Naive thymus-derived CD4-positive, alpha-beta T cell (primary cell): ENCODE measurements at regions of chr19 and their contacts with region 1.

Region 1: GRCh38 chr19:10653715-10654492 is at the start of gene ILF3:
- DNase-seq: peak; percentile 97 to 100 (median 100)
- ATAC-seq: peak; percentile 89
- H3K4me3 ChIP-seq: peak within 1 kb of the TSS; percentile 87
- H3K4me3 Mint-ChIP-seq: peak within 1 kb of the TSS; percentile 93 to 98 (median 95)
- H3K27ac ChIP-seq: peak within 1 kb of the TSS; percentile 100
- H3K27ac Mint-ChIP-seq: peak within 1 kb of the TSS; percentile 94 to 99 (median 98)
- H3K4me1 ChIP-seq: peaks cover 32 to 38% of the 10 kb centered on the region in 2 donors
- H3K4me1 Mint-ChIP-seq: peaks cover 17 to 61% (median 42%) of the 10 kb centered on the region in 7 donors
- H3K27me3 ChIP-seq: no peaks in the 10 kb centered on the region
- H3K27me3 Mint-ChIP-seq: peaks cover 0 to 3% (median 0%) of the 10 kb centered on the region in 5 donors
- total RNA-seq, gene ILF3: 346 to 515 (median 368) TPM

Region 2: GRCh38 chr19:10403137-10404021 is 250.5 kb before region 1 on chr19 and contains the start of gene CDC37:
- CTCF ChIA-PET with region 1: no interaction called
- POLR2A ChIA-PET with region 1: no interaction called
- intact Hi-C with region 1: loop called (anchors 1 kb)
- DNase-seq: peak; percentile 95 to 99 (median 97)
- ATAC-seq: peak; percentile 88
- H3K4me3 ChIP-seq: peak within 1 kb of the TSS; percentile 87
- H3K4me3 Mint-ChIP-seq: peak within 1 kb of the TSS; percentile 90 to 97 (median 95)
- H3K27ac ChIP-seq: peak within 1 kb of the TSS; percentile 97
- H3K27ac Mint-ChIP-seq: peak within 1 kb of the TSS; percentile 80 to 97 (median 95)
- H3K4me1 ChIP-seq: peaks cover 55 to 59% of the 10 kb centered on the region in 2 donors
- H3K4me1 Mint-ChIP-seq: peaks cover 40 to 85% (median 59%) of the 10 kb centered on the region in 7 donors
- H3K27me3 ChIP-seq: no peaks in the 10 kb centered on the region
- H3K27me3 Mint-ChIP-seq: peaks cover 0 to 3% (median 0%) of the 10 kb centered on the region in 5 donors
- total RNA-seq, gene CDC37: 169 to 229 (median 180) TPM

Region 3: GRCh38 chr19:10602330-10603083 is 51.4 kb before region 1 on chr19:
- CTCF ChIA-PET with region 1: interaction called, 3 read pairs
- POLR2A ChIA-PET with region 1: interaction called, 29 read pairs
- intact Hi-C with region 1: loop called (anchors 1 kb)
- DNase-seq: peak; percentile 73 to 89 (median 86)
- ATAC-seq: peak; percentile 93
- H3K4me3 ChIP-seq: peak overlapping the region; percentile 92
- H3K4me3 Mint-ChIP-seq: peak overlapping the region; percentile 97 to 100 (median 99)
- H3K27ac ChIP-seq: peak overlapping the region; percentile 100
- H3K27ac Mint-ChIP-seq: peak overlapping the region; percentile 94 to 100 (median 100)
- H3K4me1 ChIP-seq: peaks cover 15 to 20% of the 10 kb centered on the region in 2 donors
- H3K4me1 Mint-ChIP-seq: peaks cover 18 to 37% (median 31%) of the 10 kb centered on the region in 7 donors
- H3K27me3 ChIP-seq: no peaks in the 10 kb centered on the region
- H3K27me3 Mint-ChIP-seq: peaks cover 0 to 12% (median 0%) of the 10 kb centered on the region in 5 donors

Region 4: GRCh38 chr19:10760273-10760944 is 106.5 kb after region 1 on chr19:
- CTCF ChIA-PET with region 1: no interaction called
- POLR2A ChIA-PET with region 1: no interaction called
- intact Hi-C with region 1: loop called in 1 of 2 experiments (anchors 1 kb)
- DNase-seq: peak in 1 of 9 donors; percentile 57
- ATAC-seq: no peak
- H3K4me3 ChIP-seq: no peak overlapping the region
- H3K4me3 Mint-ChIP-seq: peak overlapping the region; percentile 60 to 86 (median 82)
- H3K27ac ChIP-seq: peak overlapping the region; percentile 70
- H3K27ac Mint-ChIP-seq: peak overlapping the region; percentile 83 to 99 (median 94)
- H3K4me1 ChIP-seq: peaks cover 62 to 79% of the 10 kb centered on the region in 2 donors
- H3K4me1 Mint-ChIP-seq: peaks cover 69 to 92% (median 84%) of the 10 kb centered on the region in 7 donors
- H3K27me3 ChIP-seq: no peaks in the 10 kb centered on the region
- H3K27me3 Mint-ChIP-seq: peaks cover 0 to 2% (median 0%) of the 10 kb centered on the region in 5 donors

Region 5: DNA sequence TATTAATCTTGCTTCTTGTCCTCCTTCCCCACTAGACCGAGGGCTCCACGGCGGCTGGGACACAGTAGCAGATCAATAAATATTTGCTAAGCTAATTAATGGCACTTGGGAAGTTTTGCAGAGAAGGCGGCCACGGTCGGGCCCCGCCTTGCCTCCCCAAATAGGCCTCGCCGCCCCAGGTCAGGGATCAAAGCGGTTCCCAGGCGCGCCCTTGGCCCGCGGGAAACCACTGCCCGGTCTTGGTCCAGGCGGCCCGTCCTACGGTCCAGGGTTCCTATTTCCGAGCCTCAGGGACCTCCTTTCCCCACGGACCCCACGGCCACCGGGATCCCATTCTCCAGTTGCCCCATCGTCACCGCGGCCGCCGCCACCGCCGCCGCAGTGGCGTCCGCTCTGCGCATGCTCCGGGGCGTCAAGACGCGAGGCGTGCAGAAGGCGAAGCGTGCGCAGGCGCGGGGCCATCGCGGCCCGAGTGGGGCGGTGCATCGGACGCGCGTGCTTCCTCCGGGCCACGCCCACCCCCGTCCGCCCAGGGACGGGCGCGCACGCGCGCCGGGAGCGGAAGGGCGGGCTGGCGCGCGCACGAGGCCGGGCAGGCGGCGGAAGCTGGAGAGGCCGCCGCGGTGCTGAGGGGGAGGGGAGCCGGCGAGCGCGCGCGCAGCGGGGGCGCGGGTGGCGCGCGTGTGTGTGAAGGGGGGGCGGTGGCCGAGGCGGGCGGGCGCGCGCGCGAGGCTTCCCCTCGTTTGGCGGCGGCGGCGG is 306.6 kb after region 1 on chr19 and contains the start of gene SMARCA4:
- CTCF ChIA-PET with region 1: no interaction called
- POLR2A ChIA-PET with region 1: no interaction called
- intact Hi-C with region 1: loop called (anchors 1 to 2 kb)
- DNase-seq: peak; percentile 96 to 100 (median 99)
- ATAC-seq: peak; percentile 96
- H3K4me3 ChIP-seq: peak within 1 kb of the TSS; percentile 89
- H3K4me3 Mint-ChIP-seq: peak within 1 kb of the TSS; percentile 84 to 94 (median 90)
- H3K27ac ChIP-seq: peak within 1 kb of the TSS; percentile 89
- H3K27ac Mint-ChIP-seq: peak within 1 kb of the TSS; percentile 79 to 94 (median 93)
- H3K4me1 ChIP-seq: peaks cover 28 to 33% of the 10 kb centered on the region in 2 donors
- H3K4me1 Mint-ChIP-seq: peaks cover 22 to 42% (median 34%) of the 10 kb centered on the region in 7 donors
- H3K27me3 ChIP-seq: no peaks in the 10 kb centered on the region
- H3K27me3 Mint-ChIP-seq: no peaks in the 10 kb centered on the region
- total RNA-seq, gene SMARCA4: 96.0 to 126 (median 104) TPM